ENCODE measurements at regions of chrX and their contacts with region 1.

Region 1: DNA sequence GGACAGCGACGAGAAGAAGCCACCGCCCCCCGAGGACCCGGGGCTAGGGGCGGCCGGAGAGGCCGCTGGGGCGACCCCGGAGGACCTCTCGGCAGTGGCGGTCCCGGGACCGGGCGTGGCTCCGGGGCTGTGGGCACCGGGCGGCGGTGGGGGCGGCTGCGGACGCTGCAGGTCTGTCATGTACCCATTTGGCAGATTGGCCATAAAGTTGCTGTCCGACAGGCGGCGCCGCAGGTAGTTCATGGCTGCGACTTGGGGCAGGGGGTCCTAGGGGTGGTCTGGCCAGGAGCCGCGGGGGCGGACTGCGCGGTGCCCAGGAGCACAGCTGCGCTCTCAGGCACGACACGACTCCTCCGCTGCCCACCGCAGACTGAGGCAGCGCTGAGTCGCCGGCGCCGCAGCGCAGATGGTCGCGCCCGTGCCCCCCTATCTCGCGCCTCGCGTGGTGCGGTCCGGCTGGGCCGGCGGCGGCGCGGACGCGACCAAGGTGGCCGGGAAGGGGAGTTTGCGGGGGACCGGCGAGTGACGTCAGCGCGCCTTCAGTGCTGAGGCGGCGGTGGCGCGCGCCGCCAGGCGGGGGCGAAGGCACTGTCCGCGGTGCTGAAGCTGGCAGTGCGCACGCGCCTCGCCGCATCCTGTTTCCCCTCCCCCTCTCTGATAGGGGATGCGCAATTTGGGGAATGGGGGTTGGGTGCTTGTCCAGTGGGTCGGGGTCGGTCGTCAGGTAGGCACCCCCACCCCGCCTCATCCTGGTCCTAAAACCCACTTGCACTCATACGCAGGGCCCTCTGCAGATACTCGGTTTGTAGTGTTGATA is at the start of gene SYN1:
- DNase-seq: peak; percentile 76 to 83 (median 81)
- H3K4me3 ChIP-seq: peak within 1 kb of the TSS in 1 of 2 donors; percentile 38
- H3K4me3 Mint-ChIP-seq: peak within 1 kb of the TSS; percentile 30 to 76 (median 65)
- H3K27ac ChIP-seq: no peak within 1 kb of the TSS
- H3K27ac Mint-ChIP-seq: peak within 1 kb of the TSS in 5 of 7 donors; percentile 23 to 82 (median 63)
- H3K4me1 ChIP-seq: peaks cover 5% of the 10 kb centered on the region
- H3K4me1 Mint-ChIP-seq: peaks cover 4 to 32% (median 18%) of the 10 kb centered on the region in 4 donors
- H3K27me3 ChIP-seq: no peaks in the 10 kb centered on the region
- H3K27me3 Mint-ChIP-seq: peaks cover 0 to 7% of the 10 kb centered on the region in 2 donors
- total RNA-seq, gene SYN1: 0.90 to 1.4 TPM

Region 2: DNA sequence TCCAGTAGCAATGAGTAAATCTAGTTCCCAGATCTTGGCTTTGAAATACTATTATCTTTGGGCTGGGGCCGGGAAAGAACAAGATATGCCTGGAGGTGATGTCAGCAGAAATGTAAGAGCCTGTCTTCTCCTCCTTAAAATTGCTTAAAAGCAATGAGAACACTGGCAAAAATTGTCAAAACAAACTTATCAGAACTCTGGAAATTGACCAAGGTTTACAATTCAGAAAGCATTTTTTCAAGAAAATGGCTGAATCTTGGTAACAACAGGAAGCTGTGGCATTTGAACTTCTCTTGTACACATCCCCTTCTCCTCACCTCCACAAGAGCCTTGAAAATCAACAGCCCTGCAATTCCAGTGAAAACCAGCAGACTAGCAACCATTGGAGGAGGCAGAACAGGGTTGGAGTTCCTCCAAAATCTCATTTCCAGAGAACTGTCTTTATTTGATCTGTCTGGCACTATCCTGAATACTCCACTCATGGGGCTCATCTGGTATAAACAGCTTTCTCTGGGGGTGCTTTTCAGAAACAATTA is 23.9 kb before region 1 on chrX:
- CTCF ChIA-PET with region 1: interaction called, 3 read pairs
- POLR2A ChIA-PET with region 1: interaction called, 12 read pairs
- intact Hi-C with region 1: no loop called
- DNase-seq: no peak
- H3K4me3 ChIP-seq: no peak overlapping the region
- H3K4me3 Mint-ChIP-seq: peak overlapping the region in 5 of 8 donors; percentile 20 to 66 (median 48)
- H3K27ac ChIP-seq: no peak overlapping the region
- H3K27ac Mint-ChIP-seq: peak overlapping the region in 6 of 7 donors; percentile 48 to 89 (median 66)
- H3K4me1 ChIP-seq: peaks cover 19% of the 10 kb centered on the region
- H3K4me1 Mint-ChIP-seq: peaks cover 9 to 24% (median 14%) of the 10 kb centered on the region in 4 donors
- H3K27me3 ChIP-seq: no peaks in the 10 kb centered on the region
- H3K27me3 Mint-ChIP-seq: no peaks in the 10 kb centered on the region

Region 3: GRCh38 chrX:47863187-47863586 is 243.5 kb after region 1 on chrX:
- CTCF ChIA-PET with region 1: no interaction called
- POLR2A ChIA-PET with region 1: no interaction called
- intact Hi-C with region 1: no loop called
- DNase-seq: no peak
- H3K4me3 ChIP-seq: no peak overlapping the region
- H3K4me3 Mint-ChIP-seq: no peak overlapping the region
- H3K27ac ChIP-seq: no peak overlapping the region
- H3K27ac Mint-ChIP-seq: no peak overlapping the region
- H3K4me1 ChIP-seq: no peaks in the 10 kb centered on the region
- H3K4me1 Mint-ChIP-seq: peaks cover 0 to 3% (median 0%) of the 10 kb centered on the region in 4 donors
- H3K27me3 ChIP-seq: no peaks in the 10 kb centered on the region
- H3K27me3 Mint-ChIP-seq: no peaks in the 10 kb centered on the region